OCI-LY7 (cell line): ENCODE measurements at regions of chr9 and their contacts with region 1.

Region 1: DNA sequence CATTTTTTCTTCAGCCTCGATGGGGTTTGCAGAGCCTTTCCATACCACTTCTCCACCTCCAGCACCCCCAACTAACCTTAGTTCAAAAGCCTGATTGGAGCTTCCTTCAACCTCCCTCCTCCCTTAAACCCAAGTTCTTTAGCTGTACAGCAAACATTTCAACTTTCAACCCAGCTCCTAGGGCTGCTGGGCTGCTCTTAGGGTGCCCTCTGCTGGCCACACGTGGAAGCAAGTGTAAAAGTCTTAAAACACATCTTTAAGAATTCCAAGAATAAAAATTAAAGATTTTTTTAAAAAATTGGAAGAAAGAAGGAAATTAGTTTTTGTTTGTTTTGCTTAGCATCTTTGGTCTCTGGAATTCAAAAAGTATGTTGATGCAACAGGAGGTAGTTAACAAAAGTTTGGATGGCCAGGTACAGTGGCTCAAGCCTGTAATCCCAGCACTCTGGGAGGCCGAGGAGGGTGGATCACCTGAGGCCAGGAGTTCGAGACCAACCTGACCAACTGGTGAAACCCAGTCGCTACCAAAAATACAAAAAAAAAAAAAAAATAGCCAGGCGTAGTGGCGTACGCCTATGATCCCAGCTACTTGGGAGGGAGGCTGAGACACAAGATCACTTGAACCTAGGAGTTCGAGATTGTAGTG is 15.5 kb upstream of the HSD17B3 start:
- DNase-seq: peak; percentile 47
- H3K4me3 ChIP-seq: no peak overlapping the region
- H3K27ac ChIP-seq: no peak overlapping the region
- H3K4me1 ChIP-seq: no peaks in the 10 kb centered on the region
- CTCF ChIP-seq: peak; percentile 95

Region 2: GRCh38 chr9:96203867-96204501 is 113.5 kb before region 1 on chr9:
- CTCF ChIA-PET with region 1: no interaction called
- POLR2A ChIA-PET with region 1: no interaction called
- intact Hi-C with region 1: no loop called
- DNase-seq: no peak
- H3K4me3 ChIP-seq: no peak overlapping the region
- H3K27ac ChIP-seq: no peak overlapping the region
- H3K4me1 ChIP-seq: no peaks in the 10 kb centered on the region
- CTCF ChIP-seq: no peak

Region 3: DNA sequence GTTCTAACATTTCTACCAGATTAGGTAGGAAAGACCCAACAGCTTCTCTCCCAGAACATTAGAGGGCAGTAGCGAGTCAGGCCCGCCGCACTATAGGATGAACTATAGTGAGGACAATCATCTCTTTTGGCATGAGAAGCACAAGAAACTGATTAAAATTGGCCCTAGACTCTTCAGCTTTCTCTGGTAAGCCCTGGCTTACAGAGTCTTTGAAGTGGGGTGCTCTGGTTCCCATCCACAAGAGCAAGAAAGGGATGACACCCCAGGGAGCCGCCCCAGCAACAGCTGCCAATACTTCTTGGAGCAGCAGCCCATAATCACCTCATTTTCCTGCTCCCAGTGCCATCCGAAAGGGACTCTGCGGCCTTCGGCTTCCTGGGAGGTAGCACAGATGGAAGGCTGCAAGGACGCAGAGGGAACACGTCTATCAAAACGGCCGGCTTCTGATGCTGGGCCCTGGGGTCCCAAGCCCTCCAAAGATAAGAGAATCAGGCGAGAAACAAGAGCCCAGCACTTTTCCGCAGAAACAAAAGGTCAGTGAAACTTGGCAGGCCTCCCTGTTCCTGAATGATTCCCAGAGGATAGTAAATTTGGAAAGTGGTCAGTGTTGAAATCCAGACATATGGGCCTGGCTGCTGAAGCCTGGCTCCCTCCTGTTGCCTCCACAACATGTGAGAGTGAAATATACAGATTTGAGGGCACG is 84.8 kb before region 1 on chr9:
- CTCF ChIA-PET with region 1: interaction called, 3 read pairs
- POLR2A ChIA-PET with region 1: interaction called, 4 read pairs
- intact Hi-C with region 1: loop called (anchors 1 kb)
- DNase-seq: peak; percentile 34
- H3K4me3 ChIP-seq: no peak overlapping the region
- H3K27ac ChIP-seq: no peak overlapping the region
- H3K4me1 ChIP-seq: no peaks in the 10 kb centered on the region
- CTCF ChIP-seq: peak; percentile 90